Calu3 (cell line): ENCODE measurements at regions of chr4 and their contacts with region 1.

Region 1: GRCh38 chr4:140343303-140343702 is 30.1 kb upstream of the SCOC start:
- DNase-seq: peak; percentile 86
- H3K4me3 Mint-ChIP-seq: peak overlapping the region; percentile 81
- H3K27ac Mint-ChIP-seq: peak overlapping the region; percentile 87
- H3K4me1 Mint-ChIP-seq: peaks cover 23% of the 10 kb centered on the region
- H3K27me3 Mint-ChIP-seq: no peaks in the 10 kb centered on the region
- CTCF ChIP-seq: no peak

Region 2: GRCh38 chr4:140359562-140360427 is 16.5 kb after region 1 on chr4:
- CTCF ChIA-PET with region 1: interaction called, 15 read pairs
- intact Hi-C with region 1: no loop called
- DNase-seq: peak; percentile 81
- H3K4me3 Mint-ChIP-seq: no peak overlapping the region
- H3K27ac Mint-ChIP-seq: no peak overlapping the region
- H3K4me1 Mint-ChIP-seq: peaks cover 23% of the 10 kb centered on the region
- H3K27me3 Mint-ChIP-seq: no peaks in the 10 kb centered on the region
- CTCF ChIP-seq: peak; percentile 58

Region 3: GRCh38 chr4:140406292-140406691 is 63.0 kb after region 1 on chr4:
- CTCF ChIA-PET with region 1: no interaction called
- intact Hi-C with region 1: no loop called
- DNase-seq: no peak
- H3K4me3 Mint-ChIP-seq: no peak overlapping the region
- H3K27ac Mint-ChIP-seq: no peak overlapping the region
- H3K4me1 Mint-ChIP-seq: no peaks in the 10 kb centered on the region
- H3K27me3 Mint-ChIP-seq: no peaks in the 10 kb centered on the region
- CTCF ChIP-seq: no peak